Natural killer cell (primary cell): ENCODE measurements at regions of chr1 and their contacts with region 1.

Region 1: GRCh38 chr1:172343240-172344160 is 77.0 kb upstream of the C1orf105 start:
- DNase-seq: peak in 1 of 2 donors; percentile 36
- ATAC-seq: peak; percentile 60 to 85 (median 79)
- H3K4me3 ChIP-seq: no peak overlapping the region
- H3K4me3 Mint-ChIP-seq: peak overlapping the region; percentile 70
- H3K27ac ChIP-seq: peak overlapping the region; percentile 69
- H3K27ac Mint-ChIP-seq: peak overlapping the region; percentile 85 to 88
- H3K4me1 ChIP-seq: peaks cover 8% of the 10 kb centered on the region
- H3K4me1 Mint-ChIP-seq: peaks cover 24 to 31% of the 10 kb centered on the region in 2 donors
- H3K27me3 ChIP-seq: no peaks in the 10 kb centered on the region
- H3K27me3 Mint-ChIP-seq: no peaks in the 10 kb centered on the region
- CTCF ChIP-seq: no peak

Region 2: DNA sequence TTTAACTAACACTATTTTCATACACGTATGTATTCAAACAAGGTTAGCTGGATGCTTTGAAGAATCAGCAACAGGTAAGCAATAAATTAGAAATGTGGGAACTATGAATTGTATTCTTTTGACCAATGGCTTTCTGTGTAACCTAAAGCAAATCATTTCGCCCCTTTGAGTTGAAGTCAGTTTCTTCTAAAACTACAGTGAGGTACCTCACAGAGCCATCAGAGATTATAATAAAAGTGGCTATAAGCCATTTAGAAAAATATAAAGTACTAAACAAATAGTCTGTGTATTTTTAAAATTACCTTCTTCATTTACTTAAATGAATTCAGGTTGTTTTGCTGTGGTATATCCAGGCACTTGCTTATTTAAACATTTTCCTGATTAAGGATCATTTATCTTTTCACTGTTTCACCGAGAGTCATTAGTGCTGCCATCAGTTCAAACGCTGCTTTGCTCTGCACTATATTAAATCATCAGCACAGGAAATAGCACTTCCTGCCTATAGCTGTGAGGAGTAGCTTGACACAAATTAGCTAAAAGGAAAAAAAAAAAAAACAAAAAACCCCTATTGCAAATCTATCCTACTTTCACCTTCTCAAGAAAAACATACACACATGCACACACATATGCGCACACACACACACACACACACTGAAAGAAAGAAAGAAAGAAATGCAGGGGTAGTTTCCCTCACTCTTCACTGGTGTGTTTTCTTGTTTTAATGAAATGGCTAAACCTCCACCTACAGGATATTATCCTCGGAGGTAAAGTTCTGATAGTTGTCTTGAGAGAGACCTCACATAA is 37.1 kb after region 1 on chr1:
- intact Hi-C with region 1: loop called (anchors 5 kb)
- DNase-seq: peak in 1 of 2 donors; percentile 79
- ATAC-seq: peak; percentile 94 to 95 (median 95)
- H3K4me3 ChIP-seq: no peak overlapping the region
- H3K4me3 Mint-ChIP-seq: peak overlapping the region; percentile 72
- H3K27ac ChIP-seq: peak overlapping the region; percentile 87
- H3K27ac Mint-ChIP-seq: peak overlapping the region; percentile 90 to 91
- H3K4me1 ChIP-seq: no peaks in the 10 kb centered on the region
- H3K4me1 Mint-ChIP-seq: peaks cover 27 to 31% of the 10 kb centered on the region in 2 donors
- H3K27me3 ChIP-seq: no peaks in the 10 kb centered on the region
- H3K27me3 Mint-ChIP-seq: no peaks in the 10 kb centered on the region
- CTCF ChIP-seq: no peak